Activated naive CD4-positive, alpha-beta T cell treated with anti-CD3 and anti-CD28 coated beads, Interleukin-2, amount 10 ng/mL, durations not matched to agents 7 days and 5 days (primary cell): ENCODE measurements at regions of chr11 and their contacts with region 1.

Region 1: GRCh38 chr11:48109046-48109666 is 107.5 kb upstream of the OR4B1 start:
- DNase-seq: no peak
- H3K4me3 Mint-ChIP-seq: no peak overlapping the region
- H3K27ac Mint-ChIP-seq: peak overlapping the region; percentile 86
- H3K4me1 Mint-ChIP-seq: peaks cover 61% of the 10 kb centered on the region
- H3K27me3 Mint-ChIP-seq: no peaks in the 10 kb centered on the region

Region 2: DNA sequence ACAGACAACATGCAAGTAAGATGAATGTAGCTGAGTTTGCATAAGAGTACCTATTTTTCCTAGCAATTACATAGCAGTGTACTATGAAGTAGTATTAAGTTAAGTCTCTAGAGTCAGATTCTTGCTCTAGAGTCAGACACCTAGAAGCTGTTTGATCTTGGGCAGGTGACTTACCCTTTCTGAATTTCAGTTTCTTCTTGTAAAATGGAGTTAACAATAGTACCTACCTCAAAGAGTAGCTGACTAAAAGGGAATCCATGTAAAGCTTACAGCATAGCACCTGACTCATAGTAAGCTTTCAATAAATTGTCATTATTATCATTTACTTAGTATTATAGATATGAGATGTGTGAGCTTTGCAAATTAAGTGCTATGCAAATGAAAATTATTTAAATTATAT is 176.6 kb before region 1 on chr11:
- CTCF ChIA-PET with region 1: interaction called, 220 read pairs
- DNase-seq: no peak
- H3K4me3 Mint-ChIP-seq: no peak overlapping the region
- H3K27ac Mint-ChIP-seq: no peak overlapping the region
- H3K4me1 Mint-ChIP-seq: peaks cover 50% of the 10 kb centered on the region
- H3K27me3 Mint-ChIP-seq: no peaks in the 10 kb centered on the region

Region 3: DNA sequence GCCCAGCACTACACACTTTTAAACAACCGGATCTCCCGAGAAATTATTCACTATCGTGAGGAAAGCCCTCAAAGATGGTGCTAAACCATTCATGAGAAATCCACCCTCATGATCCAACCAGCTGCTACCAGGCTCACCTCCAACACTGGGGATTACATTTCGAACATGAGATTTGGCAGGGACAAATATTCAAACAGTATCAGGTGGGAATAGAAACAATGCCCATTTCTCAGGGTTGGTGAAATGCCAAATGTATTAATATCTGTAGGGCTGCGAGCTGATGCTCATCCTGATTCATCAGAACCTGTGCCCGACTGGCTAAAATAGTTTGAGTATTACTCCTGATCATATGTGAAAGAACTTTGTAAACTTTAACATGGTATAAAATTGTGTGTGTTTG is 144.6 kb before region 1 on chr11:
- CTCF ChIA-PET with region 1: interaction called, 36 read pairs
- DNase-seq: no peak
- H3K4me3 Mint-ChIP-seq: no peak overlapping the region
- H3K27ac Mint-ChIP-seq: no peak overlapping the region
- H3K4me1 Mint-ChIP-seq: peaks cover 4% of the 10 kb centered on the region
- H3K27me3 Mint-ChIP-seq: no peaks in the 10 kb centered on the region

Region 4: DNA sequence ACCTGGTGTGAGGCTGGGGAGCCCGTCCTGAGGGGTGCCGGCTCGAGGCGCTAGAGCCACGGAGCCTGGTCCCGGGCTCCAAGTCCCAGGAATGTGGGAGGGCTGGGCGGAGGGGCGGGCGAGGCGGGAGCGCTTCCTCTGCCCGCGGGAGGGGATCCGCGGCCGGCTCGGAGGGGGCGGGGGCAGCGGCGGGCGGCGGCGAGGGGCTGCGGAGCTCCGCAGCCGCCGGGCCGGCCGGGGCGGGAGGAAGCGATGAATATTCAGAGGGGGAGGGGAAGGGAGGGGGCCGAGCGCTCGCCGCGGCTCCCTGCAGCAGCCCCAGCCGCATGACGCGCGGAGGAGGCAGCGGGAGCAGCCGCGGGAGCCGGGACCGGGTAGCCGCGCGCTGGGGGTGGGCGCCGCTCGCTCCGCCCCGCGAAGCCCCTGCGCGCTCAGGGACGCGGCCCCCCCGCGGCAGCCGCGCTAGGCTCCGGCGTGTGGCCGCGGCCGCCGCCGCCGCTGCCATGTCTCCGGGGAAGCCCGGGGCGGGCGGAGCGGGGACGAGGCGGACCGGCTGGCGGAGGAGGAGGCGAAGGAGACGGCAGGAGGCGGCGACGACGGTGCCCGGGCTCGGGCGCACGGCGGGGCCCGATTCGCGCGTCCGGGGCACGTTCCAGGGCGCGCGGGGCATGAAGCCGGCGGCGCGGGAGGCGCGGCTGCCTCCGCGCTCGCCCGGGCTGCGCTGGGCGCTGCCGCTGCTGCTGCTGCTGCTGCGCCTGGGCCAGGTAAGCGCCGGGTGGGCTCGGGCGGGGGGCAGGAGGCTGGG is 128.7 kb before region 1 on chr11 and contains the start of gene PTPRJ:
- CTCF ChIA-PET with region 1: interaction called, 13 read pairs
- DNase-seq: peak; percentile 72
- H3K4me3 Mint-ChIP-seq: peak within 1 kb of the TSS; percentile 98
- H3K27ac Mint-ChIP-seq: peak within 1 kb of the TSS; percentile 89
- H3K4me1 Mint-ChIP-seq: peaks cover 37% of the 10 kb centered on the region
- H3K27me3 Mint-ChIP-seq: peaks cover 37% of the 10 kb centered on the region

Region 5: DNA sequence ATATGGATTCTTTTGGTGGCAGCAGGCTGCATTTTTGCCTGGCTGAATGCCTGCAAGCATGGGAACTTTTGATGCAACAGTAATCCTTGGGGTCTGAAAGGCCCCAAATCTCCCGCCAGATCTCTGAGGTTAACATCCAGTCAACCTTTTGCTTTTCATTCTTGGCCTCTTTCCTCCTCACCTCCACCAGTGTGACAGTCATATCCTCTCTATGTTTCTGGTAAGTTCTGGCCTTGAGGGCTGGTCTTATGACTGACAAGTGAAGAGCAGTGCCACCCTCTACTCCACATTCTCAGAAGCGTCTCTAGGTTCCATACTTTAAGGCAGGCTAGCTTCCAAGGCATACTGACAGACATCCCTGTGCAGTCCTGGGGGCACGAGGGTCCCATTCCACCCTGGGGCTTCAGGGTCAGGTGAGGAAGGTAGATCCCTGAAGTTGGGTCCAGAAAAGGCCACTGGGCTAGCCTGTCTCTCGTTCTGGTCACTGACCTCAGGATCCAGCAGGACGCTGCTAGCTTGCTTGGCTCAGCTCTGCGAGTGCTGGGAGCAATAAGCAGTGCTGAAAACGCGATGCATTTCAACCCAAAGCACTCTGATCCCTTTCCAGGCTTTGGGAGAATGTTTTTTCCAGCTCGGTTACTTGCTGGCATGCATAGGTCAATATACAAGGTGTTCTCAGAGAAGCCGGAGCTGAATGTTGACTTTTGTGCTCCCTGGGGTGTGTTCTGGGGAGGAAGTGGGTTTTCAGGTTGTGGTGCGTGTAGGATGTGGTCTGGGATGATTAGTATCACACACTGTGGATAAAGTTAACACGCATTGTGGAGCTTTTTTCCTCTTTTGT is 53.6 kb before region 1 on chr11:
- CTCF ChIA-PET with region 1: interaction called, 21 read pairs
- DNase-seq: peak; percentile 89
- H3K4me3 Mint-ChIP-seq: peak overlapping the region; percentile 41
- H3K27ac Mint-ChIP-seq: peak overlapping the region; percentile 86
- H3K4me1 Mint-ChIP-seq: peaks cover 94% of the 10 kb centered on the region
- H3K27me3 Mint-ChIP-seq: no peaks in the 10 kb centered on the region